ENCODE measurements at regions of chr10 and their contacts with region 1.

Region 1: DNA sequence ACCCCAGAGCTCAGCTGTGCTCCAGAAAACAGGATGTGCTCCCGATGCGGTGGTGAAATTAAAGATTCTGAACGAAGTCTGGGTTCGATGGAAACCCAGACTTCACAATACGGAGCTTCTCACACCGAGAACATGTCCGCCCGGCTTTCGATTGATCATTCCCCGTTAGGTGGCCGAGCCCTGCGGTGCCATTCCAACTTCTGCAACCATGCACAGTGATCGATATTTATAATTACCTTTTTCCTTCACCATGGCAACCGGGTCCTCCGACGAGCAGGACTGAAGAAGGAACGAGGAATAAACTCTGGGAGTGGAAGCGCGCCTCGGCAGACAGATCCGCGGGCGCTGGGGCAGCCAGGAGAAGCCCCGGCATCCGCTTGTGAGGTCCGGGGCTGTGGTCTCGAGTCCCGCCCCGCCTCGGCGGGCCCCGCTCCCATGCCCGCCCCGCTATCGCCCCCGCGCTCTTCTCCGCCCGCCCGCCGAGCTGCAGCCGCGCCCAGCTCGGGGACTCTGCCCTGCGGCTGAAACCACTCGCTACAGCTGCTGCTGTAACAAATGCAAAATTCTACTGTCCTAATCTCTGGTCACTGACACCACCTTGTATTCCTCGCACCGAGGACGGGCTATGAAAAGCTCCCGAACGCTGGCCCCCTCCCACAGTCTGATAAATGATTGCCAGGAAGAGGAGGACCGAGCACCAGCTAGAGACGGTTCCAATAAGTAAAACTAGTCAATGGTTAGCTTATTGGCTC is 26.2 kb downstream of the ABLIM1 start:
- DNase-seq: peak; percentile 47
- ATAC-seq: peak; percentile 85
- H3K4me3 Mint-ChIP-seq: peak overlapping the region; percentile 74
- H3K27ac Mint-ChIP-seq: no peak overlapping the region
- H3K4me1 Mint-ChIP-seq: peaks cover 19% of the 10 kb centered on the region
- H3K27me3 Mint-ChIP-seq: peaks cover 37% of the 10 kb centered on the region
- CTCF ChIP-seq: no peak

Region 2: GRCh38 chr10:114609518-114610426 is 22.1 kb before region 1 on chr10:
- CTCF ChIA-PET with region 1: no interaction called
- POLR2A ChIA-PET with region 1: no interaction called
- intact Hi-C with region 1: loop called (anchors 1 kb)
- DNase-seq: no peak
- ATAC-seq: no peak
- H3K4me3 Mint-ChIP-seq: no peak overlapping the region
- H3K27ac Mint-ChIP-seq: no peak overlapping the region
- H3K4me1 Mint-ChIP-seq: no peaks in the 10 kb centered on the region
- H3K27me3 Mint-ChIP-seq: peaks cover 2% of the 10 kb centered on the region
- CTCF ChIP-seq: no peak

Measured in activated CD8-positive, alpha-beta T cell treated with anti-CD3 and anti-CD28 coated beads for 36 hours (primary cell).